ENCODE measurements at regions of chr9 and their contacts with region 1.

Region 1: DNA sequence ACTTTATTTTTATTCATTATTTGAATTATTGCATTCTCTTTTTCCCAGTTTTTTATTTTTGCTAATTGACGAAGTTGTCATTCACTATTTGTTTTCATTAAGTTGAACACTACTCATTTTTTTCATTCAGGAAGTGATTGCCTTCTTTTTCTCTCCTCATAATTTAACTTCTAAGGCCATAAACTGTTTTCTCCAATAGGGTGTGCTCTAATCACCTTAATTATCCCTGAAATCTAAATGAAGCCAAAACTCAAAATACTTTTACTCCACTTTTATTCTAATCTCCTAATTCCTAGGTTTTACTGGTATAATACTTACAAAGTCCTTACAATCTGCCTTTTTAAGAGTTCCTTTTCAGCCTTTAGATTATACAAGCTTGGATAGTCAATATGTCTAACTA is 2.9 kb upstream of the OR13C2 start:
- DNase-seq: no peak
- ATAC-seq: no peak
- H3K4me3 ChIP-seq: no peak overlapping the region
- H3K4me3 Mint-ChIP-seq: no peak overlapping the region
- H3K27ac ChIP-seq: no peak overlapping the region
- H3K27ac Mint-ChIP-seq: no peak overlapping the region
- H3K4me1 ChIP-seq: no peaks in the 10 kb centered on the region
- H3K4me1 Mint-ChIP-seq: no peaks in the 10 kb centered on the region
- H3K27me3 ChIP-seq: no peaks in the 10 kb centered on the region
- H3K27me3 Mint-ChIP-seq: no peaks in the 10 kb centered on the region
- CTCF ChIP-seq: no peak

Region 2: DNA sequence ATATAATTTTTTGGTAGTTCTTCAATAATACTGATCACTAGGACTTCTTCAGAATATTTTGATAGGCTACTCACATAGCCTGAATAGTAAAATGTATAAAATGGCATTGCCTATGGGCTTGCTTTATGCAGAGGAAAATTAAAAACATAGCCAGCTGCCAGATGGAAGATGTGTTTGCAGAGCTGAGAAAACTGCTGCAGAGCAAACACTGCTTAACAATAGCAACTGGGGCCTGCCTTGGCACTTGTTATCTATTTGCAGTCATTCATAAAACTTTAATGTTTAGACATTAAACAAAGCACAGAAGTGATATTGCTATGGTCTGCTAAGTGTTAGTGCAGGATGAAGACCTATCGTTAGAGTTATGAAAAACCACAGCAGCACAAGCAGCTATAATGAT is 665.7 kb before region 1 on chr9:
- CTCF ChIA-PET with region 1: no interaction called
- POLR2A ChIA-PET with region 1: no interaction called
- intact Hi-C with region 1: loop called in 1 of 2 experiments (anchors 10 kb)
- DNase-seq: no peak
- ATAC-seq: no peak
- H3K4me3 ChIP-seq: no peak overlapping the region
- H3K4me3 Mint-ChIP-seq: no peak overlapping the region
- H3K27ac ChIP-seq: no peak overlapping the region
- H3K27ac Mint-ChIP-seq: no peak overlapping the region
- H3K4me1 ChIP-seq: no peaks in the 10 kb centered on the region
- H3K4me1 Mint-ChIP-seq: no peaks in the 10 kb centered on the region
- H3K27me3 ChIP-seq: no peaks in the 10 kb centered on the region
- H3K27me3 Mint-ChIP-seq: no peaks in the 10 kb centered on the region
- CTCF ChIP-seq: no peak

Region 3: DNA sequence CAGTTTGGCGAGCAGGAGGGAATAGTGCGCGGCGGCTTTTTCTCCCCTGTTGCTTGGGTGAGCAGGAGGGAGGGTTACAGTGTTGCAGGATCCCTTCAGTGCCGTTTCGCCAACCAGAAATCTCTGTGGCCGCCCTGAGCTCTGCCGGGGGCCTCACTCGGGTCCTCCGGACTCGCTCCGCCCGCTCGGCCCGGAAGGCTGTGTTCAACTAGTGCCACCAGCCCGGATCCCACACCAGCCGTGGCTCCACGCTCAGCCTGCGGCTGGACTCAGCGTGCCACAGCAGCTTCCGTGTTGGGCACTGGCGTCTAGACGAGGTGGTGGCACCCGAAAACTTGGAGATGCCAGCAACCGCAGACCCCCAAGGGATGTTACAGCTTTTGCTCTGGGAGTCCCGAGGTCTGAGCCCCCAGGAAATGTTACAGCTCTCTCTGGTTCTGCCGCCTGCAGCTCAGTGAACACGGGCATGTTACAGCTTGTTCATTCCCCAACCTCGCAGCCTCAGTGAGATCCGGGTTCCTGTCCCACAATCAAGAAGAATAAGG is 25.7 kb after region 1 on chr9:
- CTCF ChIA-PET with region 1: no interaction called
- POLR2A ChIA-PET with region 1: no interaction called
- intact Hi-C with region 1: no loop called
- DNase-seq: no peak
- ATAC-seq: no peak
- H3K4me3 ChIP-seq: no peak overlapping the region
- H3K4me3 Mint-ChIP-seq: no peak overlapping the region
- H3K27ac ChIP-seq: no peak overlapping the region
- H3K27ac Mint-ChIP-seq: no peak overlapping the region
- H3K4me1 ChIP-seq: no peaks in the 10 kb centered on the region
- H3K4me1 Mint-ChIP-seq: no peaks in the 10 kb centered on the region
- H3K27me3 ChIP-seq: no peaks in the 10 kb centered on the region
- H3K27me3 Mint-ChIP-seq: no peaks in the 10 kb centered on the region
- CTCF ChIP-seq: no peak

Region 4: GRCh38 chr9:104711604-104712003 is 103.3 kb after region 1 on chr9:
- CTCF ChIA-PET with region 1: no interaction called
- POLR2A ChIA-PET with region 1: no interaction called
- intact Hi-C with region 1: no loop called
- DNase-seq: no peak
- ATAC-seq: no peak
- H3K4me3 ChIP-seq: no peak overlapping the region
- H3K4me3 Mint-ChIP-seq: no peak overlapping the region
- H3K27ac ChIP-seq: no peak overlapping the region
- H3K27ac Mint-ChIP-seq: no peak overlapping the region
- H3K4me1 ChIP-seq: no peaks in the 10 kb centered on the region
- H3K4me1 Mint-ChIP-seq: no peaks in the 10 kb centered on the region
- H3K27me3 ChIP-seq: no peaks in the 10 kb centered on the region
- H3K27me3 Mint-ChIP-seq: no peaks in the 10 kb centered on the region
- CTCF ChIP-seq: no peak

Measured in CD8-positive, alpha-beta T cell (primary cell).